ENCODE measurements at regions of chr1 and their contacts with region 1.

Region 1: DNA sequence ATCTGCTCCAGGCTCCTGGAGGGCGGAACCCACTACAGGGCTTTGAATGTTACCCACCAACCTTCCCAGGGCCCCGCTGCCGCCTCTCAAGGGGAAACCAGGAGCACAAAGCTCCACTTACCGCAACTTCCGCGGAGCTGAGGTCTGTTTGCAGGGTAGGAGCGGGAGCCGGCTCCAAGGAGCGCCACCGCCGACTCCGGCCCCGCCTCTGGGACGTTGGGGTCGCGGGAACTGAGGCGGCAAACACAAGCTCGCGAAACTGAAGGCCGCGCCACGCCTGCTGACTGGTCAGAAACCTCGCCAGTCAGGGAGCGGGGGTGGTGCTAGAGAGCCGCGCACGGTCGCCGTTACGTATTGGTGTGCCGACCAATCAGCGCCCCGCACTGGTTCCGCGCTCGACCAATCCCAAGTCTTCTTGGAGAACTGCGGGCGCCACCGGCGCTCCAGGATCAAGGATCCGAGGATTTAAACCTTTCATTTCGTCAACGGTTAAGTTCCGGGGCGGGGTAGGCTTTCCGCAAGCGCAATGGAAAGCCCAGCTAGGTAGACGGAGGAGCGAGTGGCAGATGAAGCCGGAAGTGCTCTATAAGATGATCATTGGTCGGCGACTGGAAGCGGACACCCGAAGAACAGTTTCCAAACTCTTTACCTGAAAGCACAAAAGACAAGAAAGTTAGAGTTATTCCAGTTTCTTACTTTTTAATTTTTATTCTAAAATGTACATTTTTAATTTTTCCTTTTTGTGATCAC is at the start of gene STIL:
- DNase-seq: peak; percentile 91 to 99 (median 96)
- ATAC-seq: peak; percentile 96
- H3K4me3 ChIP-seq: peak within 1 kb of the TSS; percentile 54 to 81
- H3K4me3 Mint-ChIP-seq: peak within 1 kb of the TSS; percentile 95
- H3K27ac ChIP-seq: peak within 1 kb of the TSS; percentile 56 to 83
- H3K27ac Mint-ChIP-seq: peak within 1 kb of the TSS; percentile 95
- H3K4me1 ChIP-seq: peaks cover 3% of the 10 kb centered on the region
- H3K4me1 Mint-ChIP-seq: peaks cover 13% of the 10 kb centered on the region
- H3K27me3 ChIP-seq: no peaks in the 10 kb centered on the region
- H3K27me3 Mint-ChIP-seq: no peaks in the 10 kb centered on the region
- CTCF ChIP-seq: no peak
- total RNA-seq, gene STIL: 1.4 to 1.8 TPM

Region 2: GRCh38 chr1:47181955-47182675 is 132.0 kb before region 1 on chr1:
- CTCF ChIA-PET with region 1: no interaction called
- POLR2A ChIA-PET with region 1: no interaction called
- intact Hi-C with region 1: no loop called
- DNase-seq: peak in 1 of 9 experiments; percentile 21
- ATAC-seq: no peak
- H3K4me3 ChIP-seq: no peak overlapping the region
- H3K4me3 Mint-ChIP-seq: no peak overlapping the region
- H3K27ac ChIP-seq: no peak overlapping the region
- H3K27ac Mint-ChIP-seq: no peak overlapping the region
- H3K4me1 ChIP-seq: peaks cover 7% of the 10 kb centered on the region
- H3K4me1 Mint-ChIP-seq: peaks cover 11% of the 10 kb centered on the region
- H3K27me3 ChIP-seq: peaks cover 0 to 10% of the 10 kb centered on the region in 2 experiments
- H3K27me3 Mint-ChIP-seq: peaks cover 30% of the 10 kb centered on the region
- CTCF ChIP-seq: no peak

Region 3: DNA sequence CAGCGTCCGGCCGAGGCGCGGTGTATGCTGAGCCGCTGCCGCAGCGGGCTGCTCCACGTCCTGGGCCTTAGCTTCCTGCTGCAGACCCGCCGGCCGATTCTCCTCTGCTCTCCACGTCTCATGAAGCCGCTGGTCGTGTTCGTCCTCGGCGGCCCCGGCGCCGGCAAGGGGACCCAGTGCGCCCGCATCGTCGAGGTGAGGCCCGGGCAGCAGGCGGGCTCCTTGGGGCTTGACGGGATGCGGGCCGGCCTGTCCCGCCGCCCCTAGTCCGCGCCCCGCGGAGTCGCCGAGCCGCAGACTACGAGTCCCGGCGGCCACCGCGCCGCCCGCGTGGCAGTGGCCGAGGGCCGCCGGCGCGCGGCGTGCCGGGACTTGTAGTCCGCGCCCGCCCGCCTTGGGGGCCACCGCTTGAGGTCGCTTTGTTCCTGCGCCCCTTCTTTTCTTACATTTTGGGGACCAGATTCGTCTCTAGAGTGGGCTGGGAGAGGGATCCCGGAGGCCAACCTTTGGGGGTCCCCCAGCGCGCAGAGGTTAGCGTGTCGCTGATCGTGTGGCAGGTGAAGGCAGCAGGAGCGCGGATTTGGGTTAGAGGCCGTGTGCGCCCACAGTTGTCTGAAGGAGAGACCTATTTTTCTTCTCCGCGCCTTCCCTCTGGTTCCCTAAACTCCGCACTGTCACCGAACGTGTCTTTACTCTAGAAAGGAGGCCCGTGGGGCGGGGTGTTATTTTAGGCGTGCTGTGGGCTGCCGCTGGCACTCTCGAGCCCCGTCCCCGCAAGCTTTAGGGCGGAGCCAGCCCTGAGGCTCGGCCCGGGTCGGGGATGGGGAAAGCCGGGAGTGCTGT is 20.1 kb after region 1 on chr1:
- CTCF ChIA-PET with region 1: interaction called, 4 read pairs
- POLR2A ChIA-PET with region 1: interaction called, 29 read pairs
- intact Hi-C with region 1: loop called (anchors 1 kb)
- DNase-seq: peak; percentile 39 to 89 (median 66)
- ATAC-seq: peak; percentile 89
- H3K4me3 ChIP-seq: peak overlapping the region; percentile 78 to 82
- H3K4me3 Mint-ChIP-seq: no peak overlapping the region
- H3K27ac ChIP-seq: peak overlapping the region; percentile 67 to 87
- H3K27ac Mint-ChIP-seq: peak overlapping the region; percentile 91
- H3K4me1 ChIP-seq: peaks cover 20% of the 10 kb centered on the region
- H3K4me1 Mint-ChIP-seq: peaks cover 16% of the 10 kb centered on the region
- H3K27me3 ChIP-seq: no peaks in the 10 kb centered on the region
- H3K27me3 Mint-ChIP-seq: no peaks in the 10 kb centered on the region
- CTCF ChIP-seq: no peak

Region 4: DNA sequence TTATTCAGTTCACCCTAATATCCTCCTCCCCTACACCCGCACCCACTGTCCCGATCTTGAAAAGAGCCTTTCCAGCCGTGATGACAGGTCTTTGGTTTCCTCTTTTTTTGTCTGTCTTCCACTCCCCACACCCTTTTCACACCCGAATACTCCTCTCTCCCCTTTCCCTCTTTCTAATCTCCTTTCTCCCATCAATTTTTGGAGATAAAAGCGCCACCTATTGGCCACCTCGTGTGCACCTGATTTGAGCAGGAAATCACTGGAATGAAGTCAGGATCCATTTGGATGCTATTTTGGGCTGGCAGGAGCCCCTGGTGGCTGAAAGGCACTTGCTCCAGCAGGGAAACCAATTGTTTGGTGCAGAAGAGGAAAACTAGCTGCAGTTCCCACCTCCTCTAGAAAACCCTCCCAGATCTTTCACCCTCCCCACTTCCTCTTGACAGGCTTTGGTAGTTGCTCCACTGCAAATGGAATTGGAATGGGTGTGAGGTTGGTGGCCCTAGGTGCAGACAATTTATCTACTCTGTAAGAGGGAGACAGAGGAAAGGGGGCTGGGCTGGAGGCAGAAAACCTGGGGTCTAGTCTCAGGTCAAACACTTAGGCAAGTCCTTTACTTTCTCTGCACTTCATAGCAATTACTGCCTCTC is 110.4 kb after region 1 on chr1:
- CTCF ChIA-PET with region 1: no interaction called
- POLR2A ChIA-PET with region 1: no interaction called
- intact Hi-C with region 1: no loop called
- DNase-seq: peak in 1 of 9 experiments; percentile 26
- ATAC-seq: no peak
- H3K4me3 ChIP-seq: no peak overlapping the region
- H3K4me3 Mint-ChIP-seq: no peak overlapping the region
- H3K27ac ChIP-seq: no peak overlapping the region
- H3K27ac Mint-ChIP-seq: no peak overlapping the region
- H3K4me1 ChIP-seq: no peaks in the 10 kb centered on the region
- H3K4me1 Mint-ChIP-seq: peaks cover 2% of the 10 kb centered on the region
- H3K27me3 ChIP-seq: peaks cover 0 to 10% of the 10 kb centered on the region in 2 experiments
- H3K27me3 Mint-ChIP-seq: peaks cover 28% of the 10 kb centered on the region
- CTCF ChIP-seq: peak; percentile 26

Measured in CD8-positive, alpha-beta T cell (primary cell).